ENCODE measurements at regions of chr12 and their contacts with region 1.

Region 1: GRCh38 chr12:56117778-56118687 is at the start of gene ZC3H10:
- DNase-seq: peak; percentile 98
- H3K4me3 Mint-ChIP-seq: peak within 1 kb of the TSS; percentile 99
- H3K27ac Mint-ChIP-seq: peak within 1 kb of the TSS; percentile 99
- H3K4me1 Mint-ChIP-seq: peaks cover 27% of the 10 kb centered on the region
- H3K27me3 Mint-ChIP-seq: no peaks in the 10 kb centered on the region
- total RNA-seq, gene ZC3H10: 7.7 and 9.2 TPM in 2 replicates

Region 2: DNA sequence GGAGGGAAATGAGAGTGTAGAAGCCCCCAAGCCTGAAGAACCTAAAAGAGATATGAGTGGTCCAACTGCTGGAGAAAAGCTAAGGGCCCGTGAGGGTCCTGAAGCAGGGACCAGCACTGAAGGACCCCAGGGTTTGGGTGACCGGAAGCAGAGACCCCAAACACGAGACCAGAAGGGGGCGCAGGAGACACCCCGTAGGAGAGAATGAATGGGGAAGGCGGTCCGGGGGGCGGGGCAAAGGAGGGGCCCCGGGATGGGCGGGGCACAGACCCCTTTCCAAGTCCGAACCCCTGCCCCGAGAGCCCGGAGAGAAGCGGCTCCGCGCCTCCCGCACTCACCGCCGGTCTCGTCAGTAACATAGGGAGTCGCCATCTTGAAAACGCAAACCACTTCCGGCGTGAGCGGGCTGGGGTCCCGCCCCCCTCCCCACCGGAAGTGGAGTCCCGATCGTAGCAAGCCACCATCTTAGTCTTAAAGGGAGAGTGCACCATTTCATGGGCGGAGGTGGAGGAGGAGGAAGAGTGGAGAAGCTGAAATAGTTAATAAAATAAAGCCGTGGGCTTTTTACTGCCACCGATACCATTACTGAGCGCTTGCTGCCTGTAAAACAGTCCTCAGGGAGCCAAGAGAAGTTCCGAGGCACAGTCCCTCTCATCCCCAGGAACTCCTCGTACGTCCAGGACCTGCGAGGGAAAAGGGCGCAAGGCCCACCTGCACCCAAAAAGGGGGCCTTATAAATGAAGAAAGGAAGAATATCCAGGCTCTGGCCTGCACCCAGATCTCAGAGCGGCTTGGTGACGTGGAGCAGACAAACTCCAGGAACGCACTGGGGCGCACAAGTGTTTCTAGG is 191.1 kb before region 1 on chr12:
- intact Hi-C with region 1: loop called (anchors 2 kb)
- DNase-seq: peak; percentile 88
- H3K4me3 Mint-ChIP-seq: peak overlapping the region; percentile 99
- H3K27ac Mint-ChIP-seq: peak overlapping the region; percentile 91
- H3K4me1 Mint-ChIP-seq: peaks cover 53% of the 10 kb centered on the region
- H3K27me3 Mint-ChIP-seq: no peaks in the 10 kb centered on the region

Region 3: DNA sequence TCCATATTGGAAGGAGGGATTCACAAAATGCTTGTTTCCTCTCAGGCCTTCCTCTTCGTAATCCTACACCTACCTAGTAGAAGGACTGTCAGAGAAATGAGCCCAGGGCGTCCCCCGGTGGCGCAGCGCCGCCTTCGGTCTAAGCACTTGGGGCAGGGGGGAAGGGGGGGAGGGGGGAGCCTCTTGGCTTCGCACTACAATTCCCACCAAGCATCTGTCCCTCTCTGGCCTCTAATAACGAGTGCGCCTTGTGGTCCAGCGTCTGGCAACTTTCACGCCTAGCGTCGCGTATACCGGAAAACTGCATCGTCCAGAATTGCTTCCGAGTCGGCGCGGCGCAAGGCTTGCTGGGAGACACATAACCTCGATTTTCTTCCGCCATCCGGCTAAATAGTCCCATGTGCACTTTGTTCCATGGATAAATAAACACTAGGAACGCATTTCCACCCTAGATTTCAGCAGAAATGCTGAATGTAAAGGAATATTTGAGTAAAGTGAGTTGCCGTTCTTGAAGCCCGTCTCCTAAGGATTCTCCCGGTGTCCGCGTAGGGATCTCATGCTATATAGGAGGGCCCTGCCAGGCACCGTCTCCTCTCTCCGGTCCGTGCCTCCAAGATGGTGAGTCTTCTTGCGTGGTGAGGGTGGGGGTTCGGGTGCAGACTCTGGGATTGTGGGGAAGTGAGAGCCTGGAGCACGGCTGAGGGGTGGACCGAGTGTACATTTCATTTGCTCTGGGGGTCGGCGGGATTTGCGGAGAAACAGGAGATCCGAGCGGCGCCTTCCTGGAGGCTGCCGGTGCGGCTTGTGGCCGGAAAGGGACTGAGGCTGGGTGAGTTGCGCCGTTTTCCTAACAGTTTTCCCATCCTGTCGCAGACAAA is 76.2 kb before region 1 on chr12 and contains the start of gene RPS26:
- intact Hi-C with region 1: loop called (anchors 2 kb)
- DNase-seq: peak; percentile 94
- H3K4me3 Mint-ChIP-seq: peak within 1 kb of the TSS; percentile 95
- H3K27ac Mint-ChIP-seq: peak within 1 kb of the TSS; percentile 93
- H3K4me1 Mint-ChIP-seq: peaks cover 44% of the 10 kb centered on the region
- H3K27me3 Mint-ChIP-seq: no peaks in the 10 kb centered on the region
- total RNA-seq, gene RPS26: 43.9 and 45.2 TPM in 2 replicates

Region 4: DNA sequence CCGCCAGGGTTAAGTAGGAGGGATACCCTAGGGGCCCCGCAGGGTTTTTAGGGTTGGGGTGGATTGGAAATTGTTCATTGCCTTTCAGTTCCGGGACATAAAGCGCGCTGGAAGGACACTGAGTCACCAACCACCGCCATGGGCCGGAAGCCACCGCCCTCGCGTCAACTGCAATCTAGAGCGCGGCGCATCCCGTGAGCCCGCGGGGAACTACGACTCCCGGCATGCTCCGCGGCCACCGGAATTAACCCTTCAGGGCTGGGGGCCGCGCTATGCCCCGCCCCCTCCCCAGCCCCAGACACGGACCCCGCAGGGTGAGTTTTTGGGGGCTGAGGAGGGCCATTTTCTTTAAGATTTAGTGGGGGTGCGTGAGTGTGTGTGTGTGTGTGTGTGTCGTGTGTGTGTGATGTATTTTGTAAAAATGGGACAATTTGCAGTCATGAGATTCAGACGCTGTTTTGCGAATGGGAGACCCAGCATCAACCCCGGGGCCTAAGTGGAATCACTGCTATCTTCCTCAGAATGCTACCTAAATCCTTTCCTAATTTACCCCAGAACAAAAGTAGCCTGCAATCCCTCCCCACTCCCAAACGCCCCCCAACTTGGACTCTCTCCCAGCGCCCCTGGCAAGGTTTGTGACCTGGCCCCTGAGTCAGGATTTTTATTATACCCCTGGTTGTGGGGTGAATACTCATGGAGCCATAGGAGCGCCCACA is 34.4 kb after region 1 on chr12 and contains the start of gene MYL6B:
- intact Hi-C with region 1: loop called (anchors 1 kb)
- DNase-seq: peak; percentile 93
- H3K4me3 Mint-ChIP-seq: peak within 1 kb of the TSS; percentile 95
- H3K27ac Mint-ChIP-seq: peak within 1 kb of the TSS; percentile 98
- H3K4me1 Mint-ChIP-seq: peaks cover 43% of the 10 kb centered on the region
- H3K27me3 Mint-ChIP-seq: no peaks in the 10 kb centered on the region
- total RNA-seq, gene MYL6B: 89.7 and 94.3 TPM in 2 replicates

Region 5: GRCh38 chr12:56224102-56224701 is 106.2 kb after region 1 on chr12 and contains the start of gene NABP2:
- intact Hi-C with region 1: loop called (anchors 1 kb)
- DNase-seq: peak; percentile 94
- H3K4me3 Mint-ChIP-seq: peak within 1 kb of the TSS; percentile 99
- H3K27ac Mint-ChIP-seq: peak within 1 kb of the TSS; percentile 76
- H3K4me1 Mint-ChIP-seq: peaks cover 41% of the 10 kb centered on the region
- H3K27me3 Mint-ChIP-seq: no peaks in the 10 kb centered on the region
- total RNA-seq, gene NABP2: 77.3 and 86.8 TPM in 2 replicates

Region 6: DNA sequence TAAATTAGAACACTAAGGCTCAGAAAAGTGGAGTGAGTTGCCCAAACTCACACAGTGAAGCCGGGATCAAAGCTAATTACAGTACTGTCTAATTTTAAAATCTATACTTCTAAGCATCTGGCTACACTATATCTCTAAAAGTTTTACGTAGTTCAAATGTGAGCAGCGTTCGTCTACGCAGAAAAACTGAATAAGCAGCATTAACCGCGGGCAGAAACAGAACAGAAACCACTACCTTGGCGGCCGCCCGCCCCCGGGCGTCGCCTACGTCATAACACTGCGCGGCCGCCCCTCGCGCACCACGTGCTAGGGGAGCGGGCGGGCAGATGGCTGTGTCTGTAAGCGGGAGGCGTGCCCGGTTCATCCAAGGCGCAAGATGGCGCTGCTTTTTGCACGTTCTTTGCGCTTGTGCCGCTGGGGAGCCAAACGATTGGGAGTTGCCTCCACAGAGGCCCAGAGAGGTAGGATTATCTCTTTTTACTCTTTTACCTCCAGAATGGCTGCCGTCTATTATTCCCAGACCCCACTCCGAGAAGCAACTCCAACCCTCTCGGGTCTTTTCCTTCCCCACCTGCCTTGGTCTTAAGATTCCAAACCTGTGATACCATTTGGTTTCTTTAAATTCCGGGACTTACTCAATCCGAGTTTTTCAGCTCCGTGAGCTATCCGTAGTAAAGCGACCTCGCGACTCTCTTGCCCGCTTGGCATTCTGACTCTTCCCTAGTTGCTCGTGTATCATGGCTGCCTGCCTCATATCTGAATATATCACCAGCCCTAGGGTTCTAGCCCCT is 350.4 kb after region 1 on chr12 and contains the start of gene SPRYD4:
- intact Hi-C with region 1: loop called (anchors 2 kb)
- DNase-seq: peak; percentile 93
- H3K4me3 Mint-ChIP-seq: peak within 1 kb of the TSS; percentile 98
- H3K27ac Mint-ChIP-seq: peak within 1 kb of the TSS; percentile 98
- H3K4me1 Mint-ChIP-seq: peaks cover 18% of the 10 kb centered on the region
- H3K27me3 Mint-ChIP-seq: no peaks in the 10 kb centered on the region
- total RNA-seq, gene SPRYD4: 4.4 and 4.5 TPM in 2 replicates

Region 7: DNA sequence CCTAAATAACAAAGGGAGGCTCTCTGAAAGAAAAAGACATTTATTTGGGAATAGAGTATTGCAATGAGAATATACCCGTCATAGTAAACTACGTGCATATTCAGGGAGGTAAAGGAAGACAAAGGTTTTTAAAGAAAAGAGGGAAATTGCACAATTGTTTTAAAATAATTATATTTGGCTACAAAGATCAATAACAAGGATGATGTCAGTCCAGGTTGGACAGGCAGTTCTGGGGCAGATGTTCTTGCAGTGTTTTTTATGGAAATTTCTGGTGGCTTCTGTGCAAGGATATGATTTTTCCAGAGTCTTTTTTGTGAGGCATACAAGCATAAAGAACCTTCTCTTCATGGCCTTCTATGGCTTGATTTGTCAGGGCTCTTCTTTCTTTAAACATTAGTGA is 674.6 kb after region 1 on chr12:
- intact Hi-C with region 1: no loop called
- DNase-seq: no peak
- H3K4me3 Mint-ChIP-seq: no peak overlapping the region
- H3K27ac Mint-ChIP-seq: no peak overlapping the region
- H3K4me1 Mint-ChIP-seq: no peaks in the 10 kb centered on the region
- H3K27me3 Mint-ChIP-seq: peaks cover 2% of the 10 kb centered on the region

Measured in activated T-helper 2 cell treated with anti-CD3 and anti-CD28 coated beads, Interferon-gamma antibody, Interleukin-2, Interleukin-4, amounts not matched to agents 10 μg/mL and 5 μg/mL and 100 μg/mL, durations not matched to agents 14 hours and 24 hours and 36 hours (primary cell).